Breast epithelium (tissue), 4 donors: ENCODE measurements at regions of chr2 and their contacts with region 1.

Region 1: GRCh38 chr2:201144101-201145051 is 28.4 kb downstream of the CFLAR start:
- DNase-seq: no peak
- H3K4me3 ChIP-seq: no peak overlapping the region
- H3K27ac ChIP-seq: no peak overlapping the region
- H3K4me1 ChIP-seq: no peaks in the 10 kb centered on the region
- H3K27me3 ChIP-seq: no peaks in the 10 kb centered on the region
- CTCF ChIP-seq: no peak
- POLR2A ChIP-seq: no peak

Region 2: DNA sequence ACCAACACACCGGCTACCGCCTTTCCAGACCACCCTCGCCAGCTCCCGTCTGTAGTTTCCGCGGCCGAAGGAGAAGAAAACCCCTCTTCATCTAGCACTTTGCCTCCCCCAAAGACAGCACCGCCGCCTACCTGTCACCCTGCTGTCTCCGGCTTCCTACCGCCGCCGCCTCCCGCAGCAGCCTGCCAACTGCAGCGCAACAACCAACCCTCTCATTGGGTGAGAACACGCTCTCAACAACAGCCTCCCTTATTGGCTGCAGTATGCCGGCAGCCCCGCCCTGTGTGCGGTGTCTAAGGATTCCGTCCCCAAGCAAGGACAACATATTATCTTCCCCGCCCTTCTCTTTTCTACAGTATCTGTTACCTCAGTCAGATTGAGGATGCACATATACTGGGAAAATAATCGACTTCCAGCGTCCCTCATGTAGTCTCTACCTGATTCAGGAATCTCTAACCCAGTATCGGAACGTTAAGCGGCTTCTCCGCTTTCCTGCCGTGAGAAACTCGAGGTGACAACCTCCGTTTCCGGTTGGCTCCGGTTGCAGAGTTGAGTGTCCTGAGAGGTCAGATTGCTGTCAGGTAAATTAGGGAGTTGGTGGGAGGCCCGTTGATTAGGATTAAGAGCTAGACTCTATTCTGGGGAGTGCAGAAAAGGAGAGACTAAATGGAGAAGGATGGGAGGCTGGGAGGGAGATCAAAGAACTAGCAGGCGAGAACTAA is 72.7 kb before region 1 on chr2 and contains the starts of genes HYCC2 and NDUFB3:
- intact Hi-C with region 1: no loop called
- DNase-seq: peak; percentile 93
- H3K4me3 ChIP-seq: peak within 1 kb of the TSS; percentile 88 to 95 (median 93)
- H3K27ac ChIP-seq: peak within 1 kb of the TSS; percentile 86 to 90
- H3K4me1 ChIP-seq: peaks cover 0 to 12% of the 10 kb centered on the region in 2 donors
- H3K27me3 ChIP-seq: no peaks in the 10 kb centered on the region
- CTCF ChIP-seq: peak in 2 of 3 donors; percentile 17 to 28
- POLR2A ChIP-seq: peak; percentile 47
- total RNA-seq, gene HYCC2: 16.4 to 38.7 (median 24.1) TPM
- total RNA-seq, gene NDUFB3: 40.8 to 51.5 (median 41.4) TPM

Region 3: DNA sequence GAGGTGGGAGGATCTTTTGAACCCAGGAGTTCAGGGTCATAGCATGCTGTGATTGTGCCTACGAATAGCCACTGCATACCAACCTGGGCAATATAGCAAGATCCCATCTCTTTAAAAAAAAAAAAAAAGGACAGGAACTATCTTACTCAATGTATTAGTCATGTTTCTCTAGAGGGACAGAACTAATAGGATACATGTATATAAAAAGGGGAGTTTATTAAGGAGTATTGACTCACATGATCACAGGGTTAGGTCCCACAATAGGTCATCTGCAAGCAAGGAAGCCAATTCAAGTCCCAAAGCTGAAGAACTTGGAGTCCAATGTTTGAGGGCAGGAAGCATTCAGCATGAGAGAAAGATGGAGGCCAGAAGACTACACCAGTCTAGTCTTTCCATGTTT is 19.8 kb after region 1 on chr2:
- intact Hi-C with region 1: loop called (anchors 2 kb)
- DNase-seq: no peak
- H3K4me3 ChIP-seq: no peak overlapping the region
- H3K27ac ChIP-seq: no peak overlapping the region
- H3K4me1 ChIP-seq: no peaks in the 10 kb centered on the region
- H3K27me3 ChIP-seq: no peaks in the 10 kb centered on the region
- CTCF ChIP-seq: no peak
- POLR2A ChIP-seq: no peak